Naive thymus-derived CD8-positive, alpha-beta T cell (primary cell): ENCODE measurements at regions of chr2 and their contacts with region 1.

Region 1: DNA sequence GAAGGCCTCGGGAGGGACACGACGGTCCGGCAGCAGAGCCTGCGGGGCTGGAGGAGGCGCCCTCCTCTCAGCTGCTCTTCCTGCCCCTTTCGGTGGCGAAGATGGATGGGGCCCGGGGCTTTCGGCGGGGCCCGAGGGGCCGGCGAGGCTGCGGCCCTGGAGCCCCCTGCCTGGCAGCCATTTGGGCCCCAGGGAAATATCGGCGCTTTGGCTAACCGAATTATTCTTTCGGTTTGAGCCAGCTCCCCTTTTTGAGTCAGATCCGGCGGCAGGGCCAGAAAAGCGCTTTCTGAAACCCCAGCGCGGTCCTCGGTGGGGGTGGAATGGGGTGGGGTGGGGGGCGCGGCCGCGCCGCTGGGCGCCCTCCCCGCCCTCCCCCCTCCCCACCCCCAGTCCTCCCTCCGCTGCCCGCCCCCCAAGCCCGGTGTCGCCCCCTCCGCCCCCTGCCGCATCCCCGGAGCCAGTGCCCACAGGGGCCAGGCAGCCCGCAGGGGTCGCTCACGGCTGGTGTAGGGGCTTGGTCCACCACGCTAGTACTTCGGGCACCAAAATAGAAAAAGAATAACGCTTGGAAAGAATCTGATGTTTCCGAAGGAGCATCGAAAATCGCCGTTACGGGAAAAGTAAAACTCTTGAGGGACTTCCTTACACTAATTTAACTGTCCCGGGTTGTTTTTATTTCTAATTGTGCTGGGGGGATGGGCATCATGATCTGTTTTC is 9.1 kb upstream of the ARID5A start:
- DNase-seq: peak in 9 of 10 donors; percentile 35 to 75 (median 48)
- ATAC-seq: peak; percentile 22 to 41
- H3K4me3 Mint-ChIP-seq: peak overlapping the region; percentile 67 to 87 (median 79)
- H3K27ac Mint-ChIP-seq: peak overlapping the region; percentile 24 to 95 (median 84)
- H3K4me1 Mint-ChIP-seq: peaks cover 13 to 59% (median 45%) of the 10 kb centered on the region in 4 donors
- H3K27me3 Mint-ChIP-seq: no peaks in the 10 kb centered on the region

Region 2: DNA sequence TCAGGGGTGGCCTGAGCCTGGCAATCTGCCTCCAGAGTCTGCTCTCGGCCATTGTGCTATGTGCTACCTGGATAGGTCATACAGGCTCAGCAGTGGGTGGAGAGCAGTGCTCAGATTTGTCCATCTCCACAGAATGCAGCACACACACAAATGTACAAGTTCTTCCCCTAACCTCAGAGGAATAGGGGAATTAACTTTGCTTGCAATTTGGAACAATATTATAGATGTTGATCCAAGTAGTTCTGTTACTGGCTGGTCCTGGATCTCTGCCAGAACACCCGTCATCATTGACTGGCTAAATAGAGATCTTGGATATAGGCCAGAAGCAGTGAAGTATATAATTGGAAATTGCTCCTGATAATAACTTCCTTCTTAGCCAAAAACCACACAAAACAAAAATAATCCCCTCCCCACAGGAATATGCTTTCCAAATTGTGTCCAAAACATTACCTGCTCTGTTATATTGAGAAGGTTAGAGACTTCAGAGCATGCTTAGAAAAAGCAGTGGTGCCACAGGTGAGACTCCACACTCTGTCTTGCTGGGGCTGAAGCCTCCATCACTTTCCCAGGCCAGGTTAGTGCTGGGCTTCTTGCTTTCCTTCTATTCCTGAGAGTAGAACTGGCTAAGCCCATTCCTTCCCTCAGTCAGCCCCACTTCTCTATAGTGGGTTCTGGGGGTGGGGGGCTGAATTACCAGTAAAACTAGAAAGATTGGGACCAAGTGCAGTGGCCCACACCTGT is 153.1 kb before region 1 on chr2:
- POLR2A ChIA-PET with region 1: no interaction called
- DNase-seq: no peak
- ATAC-seq: no peak
- H3K4me3 Mint-ChIP-seq: no peak overlapping the region
- H3K27ac Mint-ChIP-seq: no peak overlapping the region
- H3K4me1 Mint-ChIP-seq: no peaks in the 10 kb centered on the region
- H3K27me3 Mint-ChIP-seq: peaks cover 0 to 3% (median 0%) of the 10 kb centered on the region in 5 donors

Region 3: GRCh38 chr2:96407041-96407918 is 120.2 kb before region 1 on chr2:
- POLR2A ChIA-PET with region 1: interaction called, 14 read pairs
- DNase-seq: peak; percentile 53 to 94 (median 85)
- ATAC-seq: peak; percentile 94 to 96
- H3K4me3 Mint-ChIP-seq: peak overlapping the region; percentile 64 to 95 (median 88)
- H3K27ac Mint-ChIP-seq: peak overlapping the region; percentile 92 to 99 (median 98)
- H3K4me1 Mint-ChIP-seq: peaks cover 20 to 65% (median 49%) of the 10 kb centered on the region in 4 donors
- H3K27me3 Mint-ChIP-seq: no peaks in the 10 kb centered on the region

Region 4: DNA sequence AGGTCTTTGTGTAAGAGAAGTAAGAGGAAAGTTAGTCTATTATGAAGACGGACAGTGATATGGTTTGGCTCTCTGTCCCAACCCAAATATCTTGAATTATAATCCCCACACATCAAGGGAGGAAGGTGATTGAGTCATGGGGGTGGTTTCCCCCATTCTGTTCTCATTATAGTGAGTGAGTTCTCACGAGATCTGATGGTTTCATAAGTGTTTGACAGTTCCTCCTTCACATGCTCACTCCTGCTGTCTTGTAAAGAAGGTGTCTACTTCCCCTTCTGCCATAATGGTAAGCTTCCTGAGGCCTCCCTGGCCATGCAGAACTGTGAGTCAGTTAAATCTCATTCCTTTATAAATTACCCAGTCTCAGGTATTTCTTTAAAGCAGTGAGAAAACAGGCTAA is 89.9 kb before region 1 on chr2:
- POLR2A ChIA-PET with region 1: no interaction called
- DNase-seq: no peak
- ATAC-seq: no peak
- H3K4me3 Mint-ChIP-seq: no peak overlapping the region
- H3K27ac Mint-ChIP-seq: no peak overlapping the region
- H3K4me1 Mint-ChIP-seq: no peaks in the 10 kb centered on the region
- H3K27me3 Mint-ChIP-seq: peaks cover 0 to 11% (median 0%) of the 10 kb centered on the region in 5 donors

Region 5: DNA sequence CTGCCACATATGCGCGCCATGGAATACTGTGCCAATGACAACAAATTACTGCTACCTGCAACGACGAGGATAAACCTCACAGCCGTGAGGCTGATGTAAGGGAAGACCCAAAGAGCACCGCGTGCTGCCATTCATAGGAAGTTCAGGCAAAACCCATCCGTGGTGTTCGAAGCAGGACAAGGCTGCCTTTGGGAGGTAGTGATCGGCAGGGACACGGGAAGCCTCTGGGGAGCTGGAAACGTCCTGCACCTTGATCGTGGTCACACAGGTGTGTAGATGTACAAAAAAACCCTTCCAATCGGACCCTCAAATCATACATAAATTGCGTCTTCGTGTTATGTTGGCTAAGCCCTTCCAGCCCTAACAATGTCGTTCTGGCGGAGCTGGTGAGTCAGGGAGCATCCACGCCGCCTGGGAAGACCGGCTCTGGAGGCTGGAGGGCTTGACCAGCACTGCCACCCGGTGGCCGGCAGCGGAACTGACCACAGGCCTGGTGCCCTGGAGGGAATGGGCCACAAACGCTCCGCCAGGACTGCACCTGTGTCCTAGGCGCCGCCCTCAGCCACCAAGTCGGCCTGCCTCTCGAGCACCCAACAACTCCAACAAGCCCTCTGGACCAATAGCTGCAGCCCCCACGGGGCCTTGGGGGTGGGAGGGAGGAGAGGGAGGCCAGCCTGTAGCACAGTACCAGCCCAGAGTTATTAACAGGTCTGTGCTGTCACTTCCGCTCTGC is 18.2 kb before region 1 on chr2:
- POLR2A ChIA-PET with region 1: no interaction called
- DNase-seq: peak in 7 of 10 donors; percentile 29 to 51 (median 41)
- ATAC-seq: peak in 1 of 2 donors; percentile 26
- H3K4me3 Mint-ChIP-seq: peak overlapping the region in 6 of 10 donors; percentile 22 to 61 (median 40)
- H3K27ac Mint-ChIP-seq: peak overlapping the region in 2 of 10 donors; percentile 52 to 88
- H3K4me1 Mint-ChIP-seq: peaks cover 6 to 20% (median 13%) of the 10 kb centered on the region in 4 donors
- H3K27me3 Mint-ChIP-seq: peaks cover 4 to 22% (median 9%) of the 10 kb centered on the region in 5 donors

Region 6: GRCh38 chr2:96554293-96555145 is 27.1 kb after region 1 on chr2:
- POLR2A ChIA-PET with region 1: interaction called, 46 read pairs
- DNase-seq: peak; percentile 54 to 88 (median 72)
- ATAC-seq: peak; percentile 56 to 66
- H3K4me3 Mint-ChIP-seq: peak overlapping the region in 5 of 10 donors; percentile 39 to 48 (median 41)
- H3K27ac Mint-ChIP-seq: peak overlapping the region; percentile 43 to 93 (median 80)
- H3K4me1 Mint-ChIP-seq: peaks cover 6 to 29% (median 19%) of the 10 kb centered on the region in 4 donors
- H3K27me3 Mint-ChIP-seq: no peaks in the 10 kb centered on the region

Region 7: DNA sequence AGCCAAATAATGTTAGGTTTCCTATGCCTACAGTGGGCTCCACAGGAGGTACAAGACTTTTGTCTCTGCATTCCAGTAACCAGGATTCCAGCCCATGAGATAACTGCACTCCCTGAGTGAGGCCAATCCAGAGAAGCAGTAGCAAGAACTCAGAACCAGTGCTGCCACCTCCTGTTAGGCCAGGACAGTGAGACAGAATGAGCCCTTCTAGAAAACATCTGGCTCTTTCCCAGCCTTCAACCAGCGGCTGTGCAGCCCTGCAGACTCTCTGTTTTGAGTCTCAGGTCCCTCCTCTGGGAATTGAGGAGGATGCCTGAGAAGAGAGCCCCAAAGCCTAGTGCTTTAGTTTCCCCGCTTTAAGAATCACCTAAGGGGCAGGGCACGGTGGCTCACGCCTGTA is 53.3 kb after region 1 on chr2:
- POLR2A ChIA-PET with region 1: no interaction called
- DNase-seq: no peak
- ATAC-seq: no peak
- H3K4me3 Mint-ChIP-seq: no peak overlapping the region
- H3K27ac Mint-ChIP-seq: no peak overlapping the region
- H3K4me1 Mint-ChIP-seq: peaks cover 0 to 2% (median 0%) of the 10 kb centered on the region in 4 donors
- H3K27me3 Mint-ChIP-seq: no peaks in the 10 kb centered on the region